ENCODE measurements at regions of chr2 and their contacts with region 1.

Region 1: GRCh38 chr2:134897932-134898331 is 20.7 kb upstream of the CCNT2 start:
- DNase-seq: peak; percentile 45

Region 2: GRCh38 chr2:134460583-134460998 is 437.3 kb before region 1 on chr2:
- in situ Hi-C with region 1: loop called (anchors 25 kb)
- DNase-seq: peak; percentile 64

Measured in ACHN (cell line).